ENCODE measurements at regions of chr1 and their contacts with region 1.

Region 1: GRCh38 chr1:244047621-244048471 is 3.2 kb upstream of the ZBTB18 start:
- DNase-seq: peak; percentile 94
- H3K4me3 Mint-ChIP-seq: peak overlapping the region; percentile 95
- H3K27ac Mint-ChIP-seq: peak overlapping the region; percentile 91
- H3K4me1 Mint-ChIP-seq: peaks cover 25% of the 10 kb centered on the region
- H3K27me3 Mint-ChIP-seq: peaks cover 53% of the 10 kb centered on the region

Region 2: DNA sequence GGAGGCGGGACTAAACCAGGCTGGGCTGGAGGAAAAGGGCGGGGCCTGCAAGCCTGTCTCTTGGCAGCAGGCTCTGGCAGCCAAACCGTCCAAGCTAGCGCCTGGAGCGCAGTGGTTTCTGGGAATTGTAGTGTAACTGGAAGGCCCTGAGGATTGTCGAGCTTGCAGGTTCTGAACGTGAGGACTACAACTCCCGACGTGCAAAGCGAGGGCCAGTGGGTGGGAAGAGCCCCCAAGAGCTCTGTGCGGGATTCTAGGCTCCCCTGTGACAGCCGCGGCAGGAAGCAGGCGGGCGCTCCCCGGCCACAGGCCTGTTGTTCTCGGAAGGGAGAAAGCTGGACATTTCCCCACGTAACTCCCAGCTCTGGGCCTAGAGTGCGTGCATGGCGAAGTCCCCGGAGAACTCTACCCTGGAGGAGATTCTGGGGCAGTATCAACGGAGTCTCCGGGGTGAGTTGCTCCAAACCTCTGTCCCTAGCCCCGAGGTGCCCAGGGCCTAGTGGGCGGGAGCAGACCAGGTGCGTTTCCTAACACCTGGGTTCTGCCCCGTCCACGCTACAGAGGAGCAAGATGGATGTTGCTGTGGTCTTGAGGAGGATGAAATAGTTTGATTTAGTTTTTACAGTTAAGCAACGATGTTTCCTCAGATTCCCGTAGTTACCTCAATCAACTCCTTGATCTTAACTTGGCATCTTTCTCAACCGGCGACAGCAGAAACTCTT is 791.9 kb before region 1 on chr1 and contains the start of gene SDCCAG8:
- intact Hi-C with region 1: loop called (anchors 10 kb)
- DNase-seq: peak; percentile 94
- H3K4me3 Mint-ChIP-seq: peak within 1 kb of the TSS; percentile 97
- H3K27ac Mint-ChIP-seq: peak within 1 kb of the TSS; percentile 100
- H3K4me1 Mint-ChIP-seq: peaks cover 20% of the 10 kb centered on the region
- H3K27me3 Mint-ChIP-seq: no peaks in the 10 kb centered on the region
- total RNA-seq, gene SDCCAG8: 18.1 and 25.4 TPM in 2 replicates

Region 3: DNA sequence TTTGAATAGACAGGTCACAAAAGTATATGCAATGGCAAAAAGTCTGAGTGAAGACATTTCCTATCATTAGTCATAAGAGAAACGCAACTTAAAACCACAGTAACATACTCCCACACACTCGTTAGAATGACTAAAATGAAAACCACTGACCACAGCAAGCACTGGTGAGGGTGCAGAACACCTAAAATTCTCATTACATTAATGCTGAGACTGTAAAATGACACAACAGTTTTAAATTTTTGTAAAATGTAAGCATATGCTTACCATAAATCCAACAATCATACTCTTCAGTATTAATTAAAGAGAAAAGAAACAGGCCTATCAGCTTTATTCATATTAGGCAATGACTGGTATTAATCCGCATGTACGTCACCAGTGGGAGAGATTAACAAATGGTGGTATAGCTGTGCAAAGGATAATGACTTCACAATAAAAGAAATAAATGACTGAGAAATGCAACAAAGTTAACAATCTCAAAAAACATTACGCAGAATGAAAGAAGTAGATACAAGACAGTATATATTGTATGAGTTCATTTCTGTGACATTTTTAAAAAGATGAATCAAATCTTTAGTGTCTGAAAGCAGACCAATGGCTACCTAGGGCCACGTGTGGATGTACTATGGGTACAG is 451.3 kb before region 1 on chr1:
- intact Hi-C with region 1: loop called (anchors 10 kb)
- DNase-seq: no peak
- H3K4me3 Mint-ChIP-seq: peak overlapping the region; percentile 57
- H3K27ac Mint-ChIP-seq: peak overlapping the region; percentile 86
- H3K4me1 Mint-ChIP-seq: peaks cover 48% of the 10 kb centered on the region
- H3K27me3 Mint-ChIP-seq: no peaks in the 10 kb centered on the region

Region 4: DNA sequence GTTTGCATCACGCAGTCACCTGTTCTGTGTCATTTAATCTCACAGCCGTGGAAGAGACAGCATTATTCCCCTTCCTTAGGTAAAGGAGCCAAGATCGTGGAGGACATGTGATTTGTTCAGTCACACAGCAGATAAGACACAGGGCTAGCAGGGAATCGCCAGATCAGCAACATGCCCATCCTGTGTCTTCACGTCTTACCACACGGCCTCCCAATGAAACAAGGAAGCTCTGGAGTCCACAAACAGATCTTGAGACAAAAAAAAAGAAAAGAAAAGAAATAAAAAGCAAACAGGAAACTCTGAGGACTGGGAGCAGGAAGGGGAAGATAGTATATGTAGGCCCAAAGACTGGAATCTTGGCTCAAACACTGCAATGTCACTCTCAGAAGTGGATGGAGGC is 248.6 kb after region 1 on chr1:
- intact Hi-C with region 1: loop called (anchors 5 kb)
- DNase-seq: no peak
- H3K4me3 Mint-ChIP-seq: no peak overlapping the region
- H3K27ac Mint-ChIP-seq: no peak overlapping the region
- H3K4me1 Mint-ChIP-seq: peaks cover 6% of the 10 kb centered on the region
- H3K27me3 Mint-ChIP-seq: peaks cover 2% of the 10 kb centered on the region

Region 5: GRCh38 chr1:244599937-244600350 is 552.1 kb after region 1 on chr1:
- intact Hi-C with region 1: loop called (anchors 10 kb)
- DNase-seq: peak; percentile 49
- H3K4me3 Mint-ChIP-seq: peak overlapping the region; percentile 70
- H3K27ac Mint-ChIP-seq: peak overlapping the region; percentile 90
- H3K4me1 Mint-ChIP-seq: peaks cover 18% of the 10 kb centered on the region
- H3K27me3 Mint-ChIP-seq: peaks cover 4% of the 10 kb centered on the region

Measured in activated T-helper 2 cell treated with anti-CD3 and anti-CD28 coated beads, Interferon-gamma antibody, Interleukin-2, Interleukin-4, amounts not matched to agents 10 μg/mL and 5 μg/mL and 100 μg/mL, durations not matched to agents 14 hours and 24 hours and 36 hours (primary cell).